Sigmoid colon (tissue), 7 donors: ENCODE measurements at regions of chr13 and their contacts with region 1.

Region 1: DNA sequence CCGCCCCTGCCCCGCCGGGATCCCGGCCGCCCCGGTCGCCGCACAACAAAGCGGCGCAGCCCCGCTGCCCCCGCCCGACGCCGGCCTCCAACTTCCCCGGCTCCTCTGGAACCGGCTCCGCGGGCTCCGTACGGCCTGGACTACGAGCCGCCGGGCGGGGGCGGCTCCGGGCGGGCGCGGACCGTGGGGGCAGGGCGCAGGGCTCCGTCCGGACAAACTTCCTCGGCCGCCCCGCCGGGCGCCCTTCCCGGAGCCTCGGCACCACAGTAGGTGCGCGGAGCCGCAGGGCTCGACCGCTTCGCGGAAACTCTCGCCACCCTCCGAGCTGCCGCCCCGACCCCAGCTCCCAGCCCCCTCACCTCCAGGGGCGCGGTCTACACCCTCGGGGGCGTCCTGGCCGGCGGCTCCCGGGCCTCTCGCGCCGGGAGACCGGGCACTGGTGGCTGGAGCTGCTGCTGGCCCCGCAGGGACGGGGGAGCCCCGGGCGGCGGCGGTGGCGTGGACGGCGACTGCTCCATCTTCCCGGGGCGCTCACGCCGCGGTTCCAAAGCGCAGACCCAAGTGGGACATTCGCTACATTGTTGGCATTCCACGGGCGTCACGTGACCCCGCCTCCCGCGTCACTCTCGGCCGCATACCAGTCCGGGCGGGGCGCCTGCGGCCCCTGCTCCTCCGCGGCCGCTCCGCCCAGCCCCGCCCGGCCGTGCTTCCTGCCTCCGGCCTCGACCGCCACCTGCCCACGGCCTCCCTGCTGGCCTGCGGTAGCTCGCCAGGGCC is at the start of gene LATS2:
- DNase-seq: peak; percentile 99
- H3K4me3 ChIP-seq: peak within 1 kb of the TSS; percentile 86 to 96 (median 89)
- H3K27ac ChIP-seq: peak within 1 kb of the TSS; percentile 98 to 100 (median 99)
- H3K4me1 ChIP-seq: peaks cover 0 to 44% (median 39%) of the 10 kb centered on the region in 4 donors
- H3K27me3 ChIP-seq: no peaks in the 10 kb centered on the region
- CTCF ChIP-seq: peak in 1 of 4 experiments; percentile 33
- EP300 ChIP-seq: peak in 3 of 4 donors; percentile 8 to 69 (median 65)
- POLR2A ChIP-seq: peak; percentile 20 to 89
- total RNA-seq, gene LATS2: 21.8 to 45.5 (median 28.2) TPM

Region 2: GRCh38 chr13:20814224-20814910 is 246.8 kb before region 1 on chr13:
- intact Hi-C with region 1: loop called (anchors 10 kb)
- DNase-seq: peak; percentile 93
- H3K4me3 ChIP-seq: no peak overlapping the region
- H3K27ac ChIP-seq: peak overlapping the region; percentile 62 to 81 (median 76)
- H3K4me1 ChIP-seq: peaks cover 0 to 42% (median 27%) of the 10 kb centered on the region in 4 donors
- H3K27me3 ChIP-seq: no peaks in the 10 kb centered on the region
- CTCF ChIP-seq: no peak
- EP300 ChIP-seq: peak in 1 of 4 donors; percentile 55
- POLR2A ChIP-seq: no peak

Region 3: GRCh38 chr13:21014502-21015170 is 46.5 kb before region 1 on chr13:
- intact Hi-C with region 1: loop called (anchors 5 kb)
- DNase-seq: peak; percentile 78
- H3K4me3 ChIP-seq: no peak overlapping the region
- H3K27ac ChIP-seq: peak overlapping the region; percentile 53 to 77 (median 69)
- H3K4me1 ChIP-seq: peaks cover 0 to 89% (median 85%) of the 10 kb centered on the region in 4 donors
- H3K27me3 ChIP-seq: no peaks in the 10 kb centered on the region
- CTCF ChIP-seq: no peak
- EP300 ChIP-seq: peak in 1 of 4 donors; percentile 59
- POLR2A ChIP-seq: no peak

Region 4: DNA sequence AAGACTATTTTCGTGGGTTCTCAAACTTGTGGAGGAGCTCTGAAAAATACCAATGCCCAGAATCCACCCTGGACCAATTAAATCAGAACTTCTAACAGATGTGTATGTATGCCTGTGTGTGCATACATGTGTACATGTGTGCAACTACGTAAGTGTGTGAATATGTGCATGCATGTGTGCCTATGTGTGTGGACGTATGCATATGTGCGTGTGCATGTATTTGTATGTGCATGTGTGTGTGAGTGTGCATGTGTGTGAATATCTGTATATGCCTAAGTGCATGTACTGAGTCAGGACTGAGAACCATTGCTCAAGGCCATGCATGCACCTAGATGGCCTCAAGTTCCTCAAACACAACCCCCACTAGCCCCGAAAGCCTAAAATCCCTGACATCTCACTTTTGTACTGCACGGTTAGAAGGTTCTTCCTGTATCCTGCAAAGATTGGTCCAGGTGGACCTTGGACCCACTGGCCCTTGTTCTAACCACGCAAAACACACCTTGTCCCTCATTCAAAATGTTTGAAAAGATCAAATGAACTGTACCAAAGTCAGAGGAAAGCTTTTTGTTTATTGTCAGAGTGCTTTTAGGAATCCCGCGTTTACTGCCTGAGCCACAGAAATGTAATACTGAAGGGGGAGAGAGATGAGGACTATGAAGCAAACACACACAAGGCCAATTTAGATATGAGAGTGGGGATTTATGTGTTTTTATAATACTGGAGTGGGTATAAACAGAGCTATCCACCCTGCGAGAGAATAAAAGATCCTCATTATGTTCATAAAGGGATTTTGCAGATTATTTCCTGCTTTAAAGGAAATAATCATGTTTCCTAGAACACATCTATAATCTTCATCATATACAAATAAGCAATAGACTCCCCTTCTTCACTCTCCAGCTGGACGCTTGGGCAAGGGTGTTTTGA is 38.9 kb before region 1 on chr13:
- intact Hi-C with region 1: loop called (anchors 2 kb)
- DNase-seq: no peak
- H3K4me3 ChIP-seq: no peak overlapping the region
- H3K27ac ChIP-seq: peak overlapping the region; percentile 59 to 77 (median 76)
- H3K4me1 ChIP-seq: peaks cover 0 to 56% (median 51%) of the 10 kb centered on the region in 4 donors
- H3K27me3 ChIP-seq: no peaks in the 10 kb centered on the region
- CTCF ChIP-seq: no peak
- EP300 ChIP-seq: no peak
- POLR2A ChIP-seq: no peak